ENCODE measurements at regions of chr1 and their contacts with region 1.

Region 1: GRCh38 chr1:43763497-43763973 is 56.2 kb downstream of the ST3GAL3 start:
- DNase-seq: peak; percentile 58
- H3K4me3 ChIP-seq: no peak overlapping the region
- H3K27me3 ChIP-seq: no peaks in the 10 kb centered on the region
- CTCF ChIP-seq: peak; percentile 84

Region 2: DNA sequence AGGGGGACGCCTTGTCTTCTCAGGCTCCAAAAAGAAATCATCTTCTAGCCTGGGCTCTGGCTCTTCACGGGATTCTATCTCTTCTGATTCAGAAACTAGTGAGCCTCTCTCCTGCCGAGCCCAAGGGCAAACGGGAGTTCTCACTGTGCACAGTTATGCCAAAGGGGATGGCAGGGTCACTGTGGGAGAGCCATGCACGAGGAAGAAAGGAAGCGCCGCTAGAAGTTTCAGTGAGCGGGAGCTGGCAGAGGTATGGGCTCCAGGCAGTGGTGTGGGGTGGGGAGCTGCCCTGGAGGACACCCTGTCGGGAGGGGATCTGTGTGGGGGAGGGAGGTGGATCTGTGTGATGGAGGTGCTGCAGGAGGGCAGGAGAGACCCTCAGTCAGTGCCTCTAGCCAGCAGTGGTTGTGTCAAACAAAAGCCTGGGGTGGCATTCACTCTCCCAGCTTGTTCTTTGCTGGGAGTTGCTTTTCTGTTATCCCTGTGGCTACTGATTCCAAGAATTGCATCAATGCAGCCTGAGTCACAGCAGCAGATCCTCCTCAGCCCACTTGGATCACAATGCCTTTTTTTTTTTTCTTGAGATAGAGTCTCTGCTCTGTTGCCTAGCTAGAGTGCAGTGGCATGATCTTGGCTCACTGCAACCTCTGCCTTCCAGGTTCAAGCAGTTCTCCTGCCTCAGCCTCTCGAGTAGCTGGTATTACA is 91.8 kb before region 1 on chr1:
- CTCF ChIA-PET with region 1: no interaction called
- POLR2A ChIA-PET with region 1: no interaction called
- DNase-seq: no peak
- H3K4me3 ChIP-seq: no peak overlapping the region
- H3K27me3 ChIP-seq: no peaks in the 10 kb centered on the region
- CTCF ChIP-seq: no peak

Region 3: DNA sequence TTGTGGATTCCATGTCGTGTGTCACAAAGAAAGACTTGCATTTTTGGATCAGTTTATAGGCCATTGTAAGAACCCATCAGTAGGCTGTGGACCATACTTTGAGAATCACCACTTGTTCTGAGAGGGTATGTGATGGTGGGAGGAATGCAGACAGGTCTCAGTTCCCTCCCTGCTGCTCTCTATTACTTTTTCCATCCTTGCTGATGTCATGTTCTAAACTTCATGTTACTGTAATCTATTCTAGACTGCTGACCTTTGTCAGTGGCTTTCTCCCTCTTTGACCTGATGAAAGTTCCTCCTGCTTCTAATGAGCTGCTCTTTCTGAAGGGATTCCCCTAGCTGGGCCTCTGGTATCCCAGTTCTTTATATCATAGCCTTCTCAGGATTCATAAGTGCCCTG is 10.1 kb before region 1 on chr1:
- CTCF ChIA-PET with region 1: interaction called, 14 read pairs
- POLR2A ChIA-PET with region 1: no interaction called
- DNase-seq: no peak
- H3K4me3 ChIP-seq: no peak overlapping the region
- H3K27me3 ChIP-seq: no peaks in the 10 kb centered on the region
- CTCF ChIP-seq: no peak

Region 4: DNA sequence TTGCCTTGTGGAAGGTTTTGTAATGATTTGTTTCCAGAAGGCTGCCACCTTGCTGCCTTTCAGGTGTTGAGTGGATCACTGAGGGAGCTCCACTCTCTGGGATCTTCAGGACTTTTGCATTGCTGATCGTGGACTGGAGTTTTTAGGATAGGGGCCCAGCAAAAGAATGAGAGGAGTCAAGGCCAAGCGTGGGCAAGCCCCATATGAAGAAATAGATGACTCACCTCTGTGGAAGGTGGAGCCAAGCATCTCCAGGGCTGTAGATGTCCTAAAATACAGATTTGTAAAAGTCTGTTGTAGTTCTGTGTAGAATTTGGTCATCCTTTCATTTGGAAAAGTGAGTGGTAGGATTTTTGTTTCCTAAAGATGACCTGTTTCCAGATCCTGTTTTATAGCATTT is 10.8 kb after region 1 on chr1:
- CTCF ChIA-PET with region 1: interaction called, 20 read pairs
- POLR2A ChIA-PET with region 1: no interaction called
- DNase-seq: no peak
- H3K4me3 ChIP-seq: no peak overlapping the region
- H3K27me3 ChIP-seq: no peaks in the 10 kb centered on the region
- CTCF ChIP-seq: no peak

Region 5: DNA sequence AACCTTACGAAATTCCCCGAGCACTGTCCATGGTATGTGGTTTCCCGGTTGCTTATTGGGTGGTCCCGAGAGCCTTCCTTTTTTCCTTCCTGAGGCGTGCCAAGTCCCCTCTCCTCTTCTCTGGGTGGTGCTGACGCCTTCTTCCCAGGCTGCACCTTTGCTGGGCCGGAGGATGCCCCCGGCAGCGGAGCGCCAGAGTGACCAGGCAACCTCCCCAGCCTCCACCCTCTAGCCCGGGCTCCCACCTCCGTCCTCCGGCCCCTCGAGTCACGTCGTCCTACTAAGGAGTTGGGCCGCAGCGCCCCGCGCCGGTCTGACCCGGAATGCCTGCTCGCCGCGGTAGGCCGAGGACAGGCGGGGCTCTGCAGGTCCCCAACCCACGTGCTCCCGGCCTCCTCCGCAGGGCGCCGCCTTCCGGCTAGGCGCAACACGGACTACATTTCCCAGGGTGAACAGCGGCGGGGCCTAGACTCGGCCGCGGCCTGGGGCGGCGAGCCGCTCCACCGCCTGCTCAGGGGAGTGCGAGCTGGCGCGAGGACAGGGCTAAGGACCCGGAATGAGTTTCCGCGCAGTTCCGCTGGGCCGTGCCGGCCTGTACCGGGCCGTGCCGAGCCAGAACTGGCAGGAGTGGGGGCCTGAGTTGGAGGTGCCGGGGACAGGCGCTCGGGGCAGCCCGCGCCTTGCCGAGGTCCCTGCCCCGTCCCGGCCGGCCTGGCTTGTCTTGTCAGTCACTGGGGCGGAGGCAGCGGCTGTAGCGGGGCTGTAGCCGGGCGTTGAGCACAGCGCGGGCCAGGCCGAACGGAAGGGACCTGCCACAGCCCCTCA is 182.9 kb after region 1 on chr1 and contains the start of gene IPO13:
- CTCF ChIA-PET with region 1: interaction called, 42 read pairs
- POLR2A ChIA-PET with region 1: no interaction called
- DNase-seq: peak; percentile 68
- H3K4me3 ChIP-seq: peak within 1 kb of the TSS; percentile 90
- H3K27me3 ChIP-seq: no peaks in the 10 kb centered on the region
- CTCF ChIP-seq: peak; percentile 72
- polyA plus RNA-seq, gene IPO13: 13.4 and 24.8 TPM in 2 replicates